Activated T-helper 2 cell treated with anti-CD3 and anti-CD28 coated beads, Interferon-gamma antibody, Interleukin-2, Interleukin-4, amounts not matched to agents 10 μg/mL and 5 μg/mL and 100 μg/mL, durations not matched to agents 14 hours and 24 hours and 36 hours (primary cell): ENCODE measurements at regions of chr10 and their contacts with region 1.

Region 1: DNA sequence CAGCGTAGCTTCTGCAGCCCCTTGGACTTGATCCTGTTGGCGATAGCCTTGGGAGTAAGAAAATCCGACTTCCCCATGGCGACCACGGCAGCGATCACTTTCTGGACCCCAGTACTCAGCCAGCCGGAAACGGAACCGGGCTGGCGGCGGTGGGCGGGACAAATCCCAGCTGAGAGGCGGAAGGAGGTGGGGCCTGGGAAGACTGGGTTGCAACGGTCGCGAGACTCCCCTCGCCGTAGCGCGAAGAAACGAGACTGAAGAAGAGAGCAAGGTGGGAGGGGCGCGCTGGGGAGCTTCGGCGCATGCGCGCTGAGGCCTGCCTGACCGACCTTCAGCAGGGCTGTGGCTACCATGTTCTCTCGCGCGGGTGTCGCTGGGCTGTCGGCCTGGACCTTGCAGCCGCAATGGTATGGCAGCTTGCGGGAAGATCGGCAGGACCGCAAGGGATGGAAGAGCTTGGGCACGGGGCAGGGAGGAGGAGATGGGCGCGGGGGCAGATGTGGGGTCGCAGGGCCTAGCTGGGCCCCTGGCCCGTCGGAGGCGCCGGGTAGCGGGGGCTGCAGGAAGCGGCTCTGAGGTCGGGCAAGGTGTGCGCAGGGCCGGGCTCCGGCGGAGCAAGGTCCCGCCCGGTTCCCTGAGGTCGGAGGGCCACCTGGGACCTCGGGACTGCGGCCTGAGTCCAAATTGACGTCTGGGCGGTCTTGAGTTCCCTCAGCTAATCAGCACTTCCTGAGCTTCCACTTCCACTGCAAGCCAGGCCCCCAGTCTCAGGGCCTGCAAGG is at the starts of genes ATP5F1C and KIN:
- DNase-seq: peak; percentile 97
- H3K4me3 Mint-ChIP-seq: no peak within 1 kb of the TSS
- H3K27ac Mint-ChIP-seq: no peak within 1 kb of the TSS
- H3K4me1 Mint-ChIP-seq: peaks cover 36% of the 10 kb centered on the region
- H3K27me3 Mint-ChIP-seq: no peaks in the 10 kb centered on the region
- total RNA-seq, gene ATP5F1C: 354 and 403 TPM in 2 replicates
- total RNA-seq, gene KIN: 9.8 and 12.0 TPM in 2 replicates

Region 2: GRCh38 chr10:7756360-7756992 is 31.6 kb before region 1 on chr10:
- intact Hi-C with region 1: no loop called
- DNase-seq: no peak
- H3K4me3 Mint-ChIP-seq: no peak overlapping the region
- H3K27ac Mint-ChIP-seq: no peak overlapping the region
- H3K4me1 Mint-ChIP-seq: no peaks in the 10 kb centered on the region
- H3K27me3 Mint-ChIP-seq: no peaks in the 10 kb centered on the region

Region 3: DNA sequence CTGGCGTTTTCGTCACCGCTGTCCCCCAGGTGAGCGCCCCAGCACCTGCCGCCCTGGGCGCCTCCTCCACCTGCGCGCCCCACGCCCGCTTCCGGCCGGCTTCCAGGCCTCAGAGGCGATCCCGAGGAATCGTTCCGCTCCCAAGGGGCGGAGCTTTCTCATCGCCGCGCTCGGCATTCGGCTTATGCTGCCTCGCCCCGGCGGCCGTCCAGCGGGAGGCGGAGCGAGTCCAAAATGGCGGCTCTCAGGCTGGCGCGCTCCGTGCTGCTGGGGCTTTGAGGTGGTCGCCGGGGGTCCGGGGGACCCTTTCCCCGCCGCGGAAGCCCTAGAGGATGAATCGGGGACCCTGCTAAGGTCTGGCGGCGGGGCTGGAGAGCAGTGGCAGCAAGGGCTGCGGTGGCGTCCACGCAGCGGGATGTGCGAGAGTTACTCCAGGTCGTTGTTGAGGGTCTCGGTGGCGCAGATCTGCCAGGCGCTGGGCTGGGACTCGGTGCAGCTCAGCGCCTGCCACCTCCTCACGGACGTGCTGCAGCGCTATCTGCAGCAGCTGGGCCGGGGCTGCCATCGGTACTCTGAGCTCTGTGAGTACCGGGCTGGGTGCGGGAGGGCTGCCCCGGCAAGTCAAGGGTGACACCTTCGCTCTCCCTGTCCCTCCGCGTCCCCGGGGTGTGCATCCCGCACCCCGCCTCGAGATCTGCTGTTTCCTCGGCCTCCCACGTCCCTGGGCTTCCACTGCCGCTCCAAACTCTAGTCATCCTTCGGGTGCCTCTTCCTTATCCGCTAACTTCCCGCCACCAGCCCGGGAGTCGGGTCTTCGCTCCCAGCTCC is 30.5 kb after region 1 on chr10 and contains the start of gene TAF3:
- intact Hi-C with region 1: loop called (anchors 1 kb)
- DNase-seq: peak; percentile 91
- H3K4me3 Mint-ChIP-seq: peak within 1 kb of the TSS; percentile 98
- H3K27ac Mint-ChIP-seq: peak within 1 kb of the TSS; percentile 91
- H3K4me1 Mint-ChIP-seq: peaks cover 24% of the 10 kb centered on the region
- H3K27me3 Mint-ChIP-seq: peaks cover 8% of the 10 kb centered on the region
- total RNA-seq, gene TAF3: 17.4 and 17.9 TPM in 2 replicates

Region 4: GRCh38 chr10:7886025-7886424 is 98.0 kb after region 1 on chr10:
- intact Hi-C with region 1: no loop called
- DNase-seq: no peak
- H3K4me3 Mint-ChIP-seq: no peak overlapping the region
- H3K27ac Mint-ChIP-seq: no peak overlapping the region
- H3K4me1 Mint-ChIP-seq: peaks cover 29% of the 10 kb centered on the region
- H3K27me3 Mint-ChIP-seq: no peaks in the 10 kb centered on the region